ENCODE measurements at regions of chrX and their contacts with region 1.

Region 1: DNA sequence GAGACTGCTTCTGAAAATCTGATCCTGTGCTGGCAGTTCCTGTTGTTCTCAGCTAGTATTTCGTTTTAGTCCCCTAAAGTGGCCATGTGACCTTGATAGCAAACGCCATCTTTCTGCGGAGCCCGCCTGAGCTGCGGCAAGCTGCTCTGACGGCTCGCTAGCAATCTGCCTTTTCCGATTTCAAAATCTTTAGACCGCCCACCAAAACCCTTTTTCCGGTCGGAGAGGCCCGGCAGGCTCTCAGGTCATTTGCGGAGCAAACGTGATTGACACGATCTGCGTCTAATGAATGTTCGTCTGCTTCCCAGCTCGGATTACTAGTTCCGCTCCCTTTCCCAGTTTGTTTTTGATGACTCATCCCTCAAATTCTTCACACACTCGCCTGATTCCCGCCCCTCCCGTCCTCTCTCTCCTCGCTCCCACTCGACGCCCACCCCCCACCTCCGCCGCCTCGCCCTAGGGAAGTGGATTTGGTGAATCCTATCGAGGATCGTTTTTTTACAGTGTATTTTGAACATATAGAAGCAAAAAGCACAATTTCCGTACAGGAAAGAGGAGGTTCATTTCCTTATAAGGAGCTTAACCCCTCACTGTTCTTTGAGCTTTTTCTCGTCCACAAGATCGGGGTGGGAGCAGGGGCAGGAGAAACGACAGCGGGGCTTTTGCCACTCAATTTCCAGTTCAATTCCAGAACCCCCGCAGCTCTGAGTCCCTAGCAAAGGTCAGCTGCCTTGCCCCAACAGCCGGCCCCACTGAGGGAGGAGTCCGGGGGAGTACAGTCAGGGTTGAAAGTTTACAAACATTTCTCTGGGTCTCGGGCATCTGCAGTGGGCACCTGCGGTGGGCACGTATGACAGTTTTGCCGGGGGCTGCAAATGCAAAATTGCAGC is 37.5 kb downstream of the NLGN3 start:
- DNase-seq: peak; percentile 71 to 96 (median 80)
- ATAC-seq: peak; percentile 96
- H3K4me3 ChIP-seq: peak overlapping the region; percentile 36
- H3K27ac ChIP-seq: peak overlapping the region; percentile 97
- H3K4me1 ChIP-seq: peaks cover 4 to 18% of the 10 kb centered on the region in 2 experiments; a peak in 3 of 5 replicates
- H3K27me3 ChIP-seq: no peaks in the 10 kb centered on the region
- CTCF ChIP-seq: no peak
- EP300 ChIP-seq: no peak
- POLR2A ChIP-seq: peak; percentile 86
- RAD21 ChIP-seq: no peak

Region 2: GRCh38 chrX:70454441-70455365 is 727.5 kb before region 1 on chrX:
- CTCF ChIA-PET with region 1: interaction called, 4 read pairs
- POLR2A ChIA-PET with region 1: no interaction called
- in situ Hi-C with region 1: no loop called
- intact Hi-C with region 1: loop called (anchors 5 kb)
- DNase-seq: peak; percentile 84 to 92 (median 90)
- ATAC-seq: peak; percentile 94
- H3K4me3 ChIP-seq: peak overlapping the region; percentile 50
- H3K27ac ChIP-seq: peak overlapping the region; percentile 62
- H3K4me1 ChIP-seq: peaks cover 0 to 23% of the 10 kb centered on the region in 2 experiments; a peak in 4 of 5 replicates
- H3K27me3 ChIP-seq: peaks cover 0 to 9% of the 10 kb centered on the region in 2 experiments; a peak in 1 of 5 replicates
- CTCF ChIP-seq: peak; percentile 73 to 91 (median 82)
- EP300 ChIP-seq: no peak
- POLR2A ChIP-seq: peak; percentile 41; the same call in 1 of the 2 replicates
- RAD21 ChIP-seq: peak; percentile 55 to 77

Region 3: DNA sequence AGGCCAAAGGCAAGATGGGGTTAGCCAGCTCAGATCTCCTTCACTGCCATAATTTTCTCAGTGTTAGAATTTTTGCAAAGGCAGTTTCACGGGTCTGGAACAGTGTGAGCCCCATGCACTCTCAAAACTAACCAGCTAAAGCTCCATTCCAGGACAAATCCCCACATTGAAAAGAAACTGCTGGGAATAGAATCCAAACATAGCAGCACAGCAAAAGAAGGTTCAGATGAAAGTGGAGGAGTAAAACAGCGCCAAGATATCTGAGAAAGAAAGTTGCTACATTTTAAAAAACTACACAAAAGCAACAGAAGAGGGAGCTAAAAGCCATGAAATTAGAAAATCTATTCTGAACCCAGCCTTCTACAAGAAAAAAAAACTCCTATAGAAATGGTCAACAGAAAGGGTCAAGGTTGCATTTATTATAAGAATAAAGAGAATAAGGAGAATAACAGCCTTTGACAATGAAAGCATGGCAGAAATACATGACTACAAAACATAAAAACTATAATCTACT is 211.6 kb before region 1 on chrX:
- CTCF ChIA-PET with region 1: interaction called, 14 read pairs
- POLR2A ChIA-PET with region 1: interaction called, 3 read pairs
- in situ Hi-C with region 1: no loop called
- intact Hi-C with region 1: loop called (anchors 1 kb)
- DNase-seq: peak; percentile 11 to 35 (median 18)
- ATAC-seq: peak; percentile 77
- H3K4me3 ChIP-seq: no peak overlapping the region; the same call in 1 of the 2 replicates
- H3K27ac ChIP-seq: no peak overlapping the region; the same call in 2 of the 3 replicates
- H3K4me1 ChIP-seq: peaks cover 4 to 6% of the 10 kb centered on the region in 2 experiments; a peak in 2 of 5 replicates
- H3K27me3 ChIP-seq: no peaks in the 10 kb centered on the region
- CTCF ChIP-seq: peak; percentile 29 to 57 (median 31); a peak in 4 of 6 replicates
- EP300 ChIP-seq: no peak
- POLR2A ChIP-seq: no peak
- RAD21 ChIP-seq: peak; percentile 39 to 65

Region 4: GRCh38 chrX:71095543-71095911 is 86.6 kb before region 1 on chrX and contains the start of gene FOXO4:
- CTCF ChIA-PET with region 1: interaction called, 3 read pairs
- POLR2A ChIA-PET with region 1: no interaction called
- in situ Hi-C with region 1: loop called (anchors 5 kb)
- intact Hi-C with region 1: loop called (anchors 1 kb)
- DNase-seq: peak in 2 of 4 experiments; percentile 89 to 93
- ATAC-seq: peak; percentile 90
- H3K4me3 ChIP-seq: peak within 1 kb of the TSS; percentile 59
- H3K27ac ChIP-seq: peak within 1 kb of the TSS; percentile 67
- H3K4me1 ChIP-seq: peaks cover 16 to 24% of the 10 kb centered on the region in 2 experiments; a peak in 4 of 5 replicates
- H3K27me3 ChIP-seq: no peaks in the 10 kb centered on the region
- CTCF ChIP-seq: no peak
- EP300 ChIP-seq: no peak
- POLR2A ChIP-seq: peak; percentile 63
- RAD21 ChIP-seq: no peak
- polyA plus RNA-seq, gene FOXO4: 0.13 to 0.14 TPM

Region 5: GRCh38 chrX:71652405-71652804 is 470.2 kb after region 1 on chrX:
- CTCF ChIA-PET with region 1: no interaction called
- POLR2A ChIA-PET with region 1: no interaction called
- in situ Hi-C with region 1: no loop called
- intact Hi-C with region 1: loop called (anchors 5 kb)
- DNase-seq: peak; percentile 38 to 65 (median 42)
- ATAC-seq: peak; percentile 85
- H3K4me3 ChIP-seq: no peak overlapping the region
- H3K27ac ChIP-seq: no peak overlapping the region
- H3K4me1 ChIP-seq: no peaks in the 10 kb centered on the region; a peak in 2 of 5 replicates
- H3K27me3 ChIP-seq: no peaks in the 10 kb centered on the region
- CTCF ChIP-seq: peak; percentile 53 to 72 (median 60)
- EP300 ChIP-seq: no peak
- POLR2A ChIP-seq: no peak
- RAD21 ChIP-seq: peak; percentile 25 to 64